Testis (tissue), 5 donors: ENCODE measurements at regions of chr1 and their contacts with region 1.

Region 1: GRCh38 chr1:200669314-200670241 is at the start of gene DDX59:
- DNase-seq: peak; percentile 95
- H3K4me3 ChIP-seq: peak within 1 kb of the TSS; percentile 88 to 89
- H3K27ac ChIP-seq: peak within 1 kb of the TSS; percentile 98 to 100
- H3K4me1 ChIP-seq: peaks cover 13% of the 10 kb centered on the region
- H3K27me3 ChIP-seq: no peaks in the 10 kb centered on the region
- CTCF ChIP-seq: no peak
- POLR2A ChIP-seq: no peak
- total RNA-seq, gene DDX59: 24.1 to 30.2 TPM

Region 2: GRCh38 chr1:200448034-200448762 is 221.4 kb before region 1 on chr1:
- intact Hi-C with region 1: no loop called
- DNase-seq: no peak
- H3K4me3 ChIP-seq: no peak overlapping the region
- H3K27ac ChIP-seq: no peak overlapping the region
- H3K4me1 ChIP-seq: no peaks in the 10 kb centered on the region
- H3K27me3 ChIP-seq: no peaks in the 10 kb centered on the region
- CTCF ChIP-seq: no peak
- POLR2A ChIP-seq: no peak

Region 3: GRCh38 chr1:200620273-200621131 is 49.1 kb before region 1 on chr1 and contains the start of gene KIF14:
- intact Hi-C with region 1: loop called (anchors 5 kb)
- DNase-seq: peak; percentile 96
- H3K4me3 ChIP-seq: peak within 1 kb of the TSS; percentile 58 to 82
- H3K27ac ChIP-seq: peak within 1 kb of the TSS in 1 of 2 donors; percentile 60
- H3K4me1 ChIP-seq: peaks cover 13% of the 10 kb centered on the region
- H3K27me3 ChIP-seq: no peaks in the 10 kb centered on the region
- CTCF ChIP-seq: no peak
- POLR2A ChIP-seq: no peak
- total RNA-seq, gene KIF14: 3.5 to 6.8 TPM

Region 4: GRCh38 chr1:200738740-200739498 is 69.3 kb after region 1 on chr1 and contains the start of gene CAMSAP2:
- intact Hi-C with region 1: loop called (anchors 2 kb)
- DNase-seq: peak; percentile 90
- H3K4me3 ChIP-seq: peak within 1 kb of the TSS; percentile 98 to 99
- H3K27ac ChIP-seq: peak within 1 kb of the TSS; percentile 99 to 100
- H3K4me1 ChIP-seq: peaks cover 15% of the 10 kb centered on the region
- H3K27me3 ChIP-seq: no peaks in the 10 kb centered on the region
- CTCF ChIP-seq: no peak
- POLR2A ChIP-seq: peak; percentile 63
- total RNA-seq, gene CAMSAP2: 28.4 to 34.7 TPM